Activated CD4-positive, alpha-beta T cell treated with anti-CD3 and anti-CD28 coated beads, Interleukin-2, amount 10 ng/mL, durations not matched to agents 7 days and 5 days (primary cell): ENCODE measurements at regions of chr17 and their contacts with region 1.

Region 1: DNA sequence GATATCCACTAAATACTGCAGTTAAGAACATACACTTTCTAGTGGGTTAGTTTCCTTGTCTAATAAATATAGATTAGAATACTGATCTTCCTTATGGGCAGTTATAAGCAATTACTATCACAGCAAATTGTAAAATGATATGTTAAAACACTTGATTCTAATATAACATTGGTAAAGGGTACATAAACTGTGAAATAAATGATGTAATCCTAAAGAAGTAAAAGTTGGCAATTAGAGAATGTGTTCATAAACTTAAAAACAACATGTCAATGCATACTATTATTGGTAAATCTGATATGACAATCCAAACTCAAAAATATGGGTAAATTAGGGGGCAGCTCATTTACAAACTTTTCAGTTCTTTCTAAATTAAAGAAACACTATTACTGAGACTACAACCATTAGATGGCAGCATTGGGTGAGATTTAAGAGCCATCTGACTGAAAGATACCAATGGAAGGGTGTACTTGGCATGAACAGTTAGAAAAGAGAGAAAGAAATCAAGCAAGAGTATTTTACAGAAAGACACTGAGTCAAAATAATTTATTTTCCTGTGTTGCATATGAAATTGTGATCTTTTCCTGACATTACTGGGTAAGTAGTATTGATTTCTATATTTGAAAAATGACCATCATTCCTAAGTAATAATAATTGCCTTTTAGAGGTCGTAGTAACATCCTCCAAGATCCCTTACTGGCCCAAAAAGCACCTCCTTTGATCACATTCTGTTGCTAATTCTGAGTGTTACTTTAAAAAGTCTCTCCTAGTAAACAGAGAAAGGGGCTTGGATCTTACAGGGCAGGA is 119.6 kb downstream of the SPAG9 start:
- DNase-seq: peak; percentile 64
- H3K4me3 Mint-ChIP-seq: no peak overlapping the region
- H3K27ac Mint-ChIP-seq: no peak overlapping the region
- H3K4me1 Mint-ChIP-seq: peaks cover 6% of the 10 kb centered on the region
- H3K27me3 Mint-ChIP-seq: no peaks in the 10 kb centered on the region

Region 2: DNA sequence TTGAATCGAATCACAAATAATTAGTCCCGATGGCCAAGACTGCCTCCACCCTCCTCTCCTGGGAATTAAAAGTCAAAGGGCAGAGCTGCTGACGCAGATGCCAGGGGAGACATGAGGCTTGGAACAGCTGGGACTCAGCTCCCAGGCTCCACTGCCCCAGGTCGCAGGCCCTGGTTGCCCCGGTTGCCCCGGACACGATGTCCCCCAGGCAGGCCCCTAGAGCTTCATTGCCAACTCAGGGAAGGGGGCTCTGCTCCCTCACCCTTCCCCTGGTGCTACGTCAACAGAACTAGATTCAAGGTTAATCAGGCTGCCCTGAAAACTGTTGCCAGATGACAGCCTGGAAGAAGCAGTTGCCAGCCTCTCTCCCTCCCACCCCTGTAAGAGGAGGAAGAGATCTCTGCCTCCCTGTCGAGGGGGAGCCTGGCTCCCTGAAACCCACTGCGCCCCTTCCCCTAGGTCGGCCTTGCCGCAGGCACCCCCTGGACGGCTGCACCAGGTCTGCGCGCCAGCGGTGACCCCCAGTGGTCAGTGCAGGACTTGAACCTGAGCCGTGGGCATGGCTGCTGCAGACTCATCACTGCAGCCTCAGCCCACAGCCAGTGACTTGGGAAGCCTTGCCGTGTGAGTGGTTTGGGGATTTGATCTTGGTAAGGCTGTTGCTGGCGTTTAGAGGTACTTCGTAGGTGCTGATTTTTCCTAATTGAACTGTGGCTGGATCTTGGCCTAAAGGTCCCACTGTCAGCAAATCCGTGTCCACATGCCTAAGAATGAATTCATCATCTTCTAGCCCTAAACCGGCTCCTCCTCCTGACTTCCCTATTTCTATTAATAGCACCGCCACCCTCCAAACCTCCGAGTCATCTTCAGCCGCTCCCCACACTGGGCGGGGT is 50.8 kb before region 1 on chr17:
- CTCF ChIA-PET with region 1: no interaction called
- POLR2A ChIA-PET with region 1: no interaction called
- DNase-seq: peak; percentile 55
- H3K4me3 Mint-ChIP-seq: no peak overlapping the region
- H3K27ac Mint-ChIP-seq: no peak overlapping the region
- H3K4me1 Mint-ChIP-seq: peaks cover 52% of the 10 kb centered on the region
- H3K27me3 Mint-ChIP-seq: no peaks in the 10 kb centered on the region

Region 3: GRCh38 chr17:51046514-51047384 is 45.7 kb after region 1 on chr17:
- CTCF ChIA-PET with region 1: no interaction called
- POLR2A ChIA-PET with region 1: no interaction called
- DNase-seq: no peak
- H3K4me3 Mint-ChIP-seq: no peak overlapping the region
- H3K27ac Mint-ChIP-seq: no peak overlapping the region
- H3K4me1 Mint-ChIP-seq: no peaks in the 10 kb centered on the region
- H3K27me3 Mint-ChIP-seq: no peaks in the 10 kb centered on the region

Region 4: DNA sequence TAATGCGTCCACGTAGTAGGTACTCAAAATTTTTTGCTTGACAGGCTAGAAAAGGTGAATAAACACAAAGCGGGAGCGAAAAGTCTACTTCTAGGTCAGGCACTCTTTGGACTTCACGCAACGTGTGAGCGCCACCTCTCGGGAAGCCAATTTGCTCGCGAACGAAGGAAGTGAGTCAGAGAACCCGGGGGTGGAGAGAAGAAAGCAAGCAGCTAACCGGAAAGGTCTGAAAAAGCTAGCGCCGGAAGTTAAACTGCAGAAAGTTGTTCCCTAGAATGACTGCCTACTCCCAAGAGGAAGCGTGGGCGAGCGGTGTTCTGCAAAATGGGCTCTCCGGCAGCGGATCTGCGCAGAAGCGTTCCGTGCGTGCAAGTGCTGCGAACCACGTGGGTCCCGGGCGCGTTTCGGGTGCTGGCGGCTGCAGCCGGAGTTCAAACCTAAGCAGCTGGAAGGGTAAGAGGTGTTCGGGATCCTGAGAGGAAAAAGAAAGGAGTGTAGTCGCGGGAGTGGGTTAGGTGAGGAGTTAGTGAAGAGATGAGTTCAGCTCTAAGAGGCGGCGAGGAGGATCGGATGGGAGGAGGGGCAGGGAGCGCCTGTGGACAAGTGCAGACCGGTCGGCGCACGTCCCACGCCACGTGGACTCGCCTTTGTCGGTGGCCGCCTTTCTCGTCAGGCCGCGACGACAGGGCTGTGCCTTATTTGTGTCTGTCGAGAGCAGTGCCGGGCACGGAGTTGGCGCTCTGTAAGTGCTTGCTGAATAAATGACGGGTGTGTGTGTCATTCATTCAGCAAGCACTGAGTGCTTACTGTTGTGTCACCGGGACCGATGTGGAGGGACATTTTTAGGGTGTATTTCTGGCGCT is 152.4 kb after region 1 on chr17 and contains the start of gene NME1:
- CTCF ChIA-PET with region 1: interaction called, 15 read pairs
- POLR2A ChIA-PET with region 1: interaction called, 3 read pairs
- DNase-seq: peak; percentile 98
- H3K4me3 Mint-ChIP-seq: no peak within 1 kb of the TSS
- H3K27ac Mint-ChIP-seq: no peak within 1 kb of the TSS
- H3K4me1 Mint-ChIP-seq: peaks cover 3% of the 10 kb centered on the region
- H3K27me3 Mint-ChIP-seq: no peaks in the 10 kb centered on the region
- total RNA-seq, gene NME1: 104 to 107 TPM